T-cell (primary cell): ENCODE measurements at regions of chr1 and their contacts with region 1.

Region 1: GRCh38 chr1:84479998-84480397 is 932 bp downstream of the RPF1 start:
- DNase-seq: no peak
- ATAC-seq: no peak
- H3K4me3 ChIP-seq: peak overlapping the region; percentile 74 to 79
- H3K4me3 Mint-ChIP-seq: peak overlapping the region; percentile 95 to 98 (median 96)
- H3K27ac ChIP-seq: peak overlapping the region; percentile 79
- H3K27ac Mint-ChIP-seq: peak overlapping the region; percentile 98 to 99
- H3K4me1 ChIP-seq: peaks cover 16 to 18% of the 10 kb centered on the region in 2 experiments
- H3K4me1 Mint-ChIP-seq: peaks cover 48 to 53% (median 49%) of the 10 kb centered on the region in 3 donors
- H3K27me3 ChIP-seq: peaks cover 0 to 10% of the 10 kb centered on the region in 2 experiments
- H3K27me3 Mint-ChIP-seq: peaks cover 12 to 23% of the 10 kb centered on the region in 2 donors

Region 2: DNA sequence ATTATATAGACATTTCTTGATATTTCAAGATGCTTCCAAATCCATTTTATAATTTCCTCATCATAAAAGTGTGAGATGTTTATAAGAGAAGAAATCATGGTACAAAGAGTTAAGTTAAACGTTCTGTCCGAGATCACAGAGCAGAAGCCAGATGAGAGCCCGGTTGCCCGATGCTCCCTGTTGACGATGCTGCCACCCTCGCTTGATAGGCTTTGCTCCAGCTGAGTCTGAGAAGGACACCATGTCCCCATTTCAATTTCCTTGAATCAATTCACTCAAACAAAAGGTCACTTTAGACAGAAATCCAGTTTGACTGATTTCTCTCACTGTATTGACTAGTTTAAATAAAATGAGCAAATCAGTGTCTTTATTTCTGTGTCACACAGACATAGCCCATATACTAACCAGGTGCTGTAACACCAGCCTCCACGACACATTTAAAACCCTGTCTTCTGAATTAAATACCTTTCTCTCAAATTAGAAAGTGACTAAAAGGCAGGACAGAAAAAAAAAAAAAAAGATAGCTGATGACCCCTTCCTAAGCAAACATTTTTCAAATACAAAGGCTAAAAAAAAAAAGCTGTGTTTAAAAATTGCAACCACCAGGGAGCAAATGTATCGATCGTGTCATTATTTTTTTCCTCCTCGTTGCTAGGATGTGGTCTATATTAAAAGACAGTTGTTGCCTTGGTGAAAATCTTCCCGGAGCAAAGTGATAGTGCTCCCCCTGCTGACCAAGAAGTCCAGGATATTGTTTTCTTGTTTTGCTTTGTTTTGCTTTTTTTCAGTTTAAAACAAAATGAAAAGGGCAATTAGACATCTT is 46.5 kb before region 1 on chr1:
- CTCF ChIA-PET with region 1: interaction called, 4 to 10 read pairs
- POLR2A ChIA-PET with region 1: interaction called in 1 of 2 experiments, 12 read pairs
- DNase-seq: peak in 34 of 35 experiments; percentile 17 to 90 (median 47)
- ATAC-seq: peak; percentile 61 to 88 (median 72)
- H3K4me3 ChIP-seq: peak overlapping the region in 1 of 2 donors; percentile 29
- H3K4me3 Mint-ChIP-seq: peak overlapping the region in 2 of 3 donors; percentile 62 to 72
- H3K27ac ChIP-seq: peak overlapping the region; percentile 61
- H3K27ac Mint-ChIP-seq: no peak overlapping the region
- H3K4me1 ChIP-seq: peaks cover 24 to 40% of the 10 kb centered on the region in 2 experiments
- H3K4me1 Mint-ChIP-seq: peaks cover 5 to 11% (median 11%) of the 10 kb centered on the region in 3 donors
- H3K27me3 ChIP-seq: no peaks in the 10 kb centered on the region
- H3K27me3 Mint-ChIP-seq: no peaks in the 10 kb centered on the region